Adrenal gland (tissue), 19 donors: ENCODE measurements at regions of chr22 and their contacts with region 1.

Region 1: GRCh38 chr22:20509344-20510047 is 2.1 kb downstream of the MED15 start:
- DNase-seq: peak; percentile 86 to 97 (median 95)
- H3K4me3 ChIP-seq: peak overlapping the region in 2 of 4 donors; percentile 12 to 89
- H3K27ac ChIP-seq: peak overlapping the region; percentile 96 to 99 (median 99)
- H3K4me1 ChIP-seq: peaks cover 33 to 52% of the 10 kb centered on the region in 2 donors
- H3K27me3 ChIP-seq: no peaks in the 10 kb centered on the region
- CTCF ChIP-seq: no peak
- POLR2A ChIP-seq: peak; percentile 75 to 95

Region 2: GRCh38 chr22:20568989-20569769 is 59.7 kb after region 1 on chr22:
- intact Hi-C with region 1: loop called in 1 of 2 experiments (anchors 10 kb)
- DNase-seq: peak; percentile 65 to 93 (median 89)
- H3K4me3 ChIP-seq: no peak overlapping the region
- H3K27ac ChIP-seq: peak overlapping the region in 4 of 5 donors; percentile 48 to 89 (median 76)
- H3K4me1 ChIP-seq: peaks cover 28 to 48% of the 10 kb centered on the region in 2 donors
- H3K27me3 ChIP-seq: no peaks in the 10 kb centered on the region
- CTCF ChIP-seq: peak in 1 of 6 experiments; percentile 5
- POLR2A ChIP-seq: peak in 1 of 2 donors; percentile 68